A549 (cell line): ENCODE measurements at regions of chr16 and their contacts with region 1.

Region 1: DNA sequence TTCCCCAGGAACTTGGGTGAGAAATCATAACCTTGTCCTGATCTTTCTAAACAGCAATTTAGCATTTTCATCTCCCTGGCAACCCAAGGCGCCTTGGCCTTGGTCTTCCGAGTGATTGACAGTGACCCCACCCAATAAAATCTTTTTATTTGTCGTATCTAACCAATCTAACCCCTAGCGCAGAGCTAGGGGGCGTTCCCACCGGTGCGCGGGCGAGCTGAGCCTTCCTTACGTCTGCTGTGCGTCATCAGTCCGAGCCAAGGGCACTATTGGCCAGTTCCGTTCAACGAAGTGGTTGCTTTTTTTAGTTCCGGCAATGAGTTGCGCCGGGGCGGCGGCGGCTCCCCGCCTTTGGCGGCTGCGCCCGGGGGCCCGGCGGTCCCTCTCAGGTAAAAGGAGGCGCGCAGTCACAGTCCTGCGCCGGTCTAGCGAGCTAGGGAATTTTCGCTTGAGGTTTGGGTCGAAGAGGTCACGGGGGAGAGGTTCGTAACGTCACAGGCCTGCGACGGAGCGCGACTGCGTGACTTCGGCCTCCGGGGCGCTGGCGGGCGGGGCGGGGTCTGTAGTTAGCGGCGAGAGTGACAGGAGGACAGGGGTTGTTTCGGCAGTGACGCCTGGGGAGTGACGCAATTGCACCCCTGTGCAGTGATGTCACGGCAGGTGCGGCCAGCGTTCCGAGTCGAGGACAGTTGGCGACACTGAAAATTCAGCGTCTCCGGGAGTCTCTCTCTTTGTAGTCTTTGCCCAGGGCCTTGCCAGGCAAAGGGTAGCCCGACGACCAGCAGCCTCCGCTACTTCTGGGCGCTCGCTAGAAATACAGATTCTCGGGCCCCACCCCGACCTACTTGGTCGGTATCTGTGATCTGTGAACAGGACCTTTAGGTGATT is at the start of gene COQ7:
- DNase-seq: peak; percentile 95 to 100
- ATAC-seq: peak; percentile 93
- H3K4me3 ChIP-seq: peak within 1 kb of the TSS; percentile 63
- H3K27ac ChIP-seq: peak within 1 kb of the TSS; percentile 95 to 99
- H3K4me1 ChIP-seq: peaks cover 12% of the 10 kb centered on the region; the same call in 2 of the 3 replicates
- CTCF ChIP-seq: no peak
- EP300 ChIP-seq: no peak
- POLR2A ChIP-seq: peak; percentile 17; the same call in 1 of the 2 replicates
- RAD21 ChIP-seq: no peak
- polyA plus RNA-seq, gene COQ7: 17.9 and 23.8 TPM in 2 replicates

Region 2: GRCh38 chr16:18999045-18999393 is 68.6 kb before region 1 on chr16:
- CTCF ChIA-PET with region 1: interaction called, 4 read pairs
- POLR2A ChIA-PET with region 1: interaction called, 16 read pairs
- DNase-seq: no peak
- ATAC-seq: peak in 1 of 2 experiments; percentile 9; a peak in 4 of 6 replicates
- H3K4me3 ChIP-seq: peak overlapping the region; percentile 11; the same call in 1 of the 3 replicates
- H3K27ac ChIP-seq: peak overlapping the region; percentile 87 to 89
- H3K4me1 ChIP-seq: peaks cover 68% of the 10 kb centered on the region
- CTCF ChIP-seq: no peak
- EP300 ChIP-seq: no peak
- POLR2A ChIP-seq: no peak
- RAD21 ChIP-seq: no peak